ENCODE measurements at regions of chr5 and their contacts with region 1.

Region 1: DNA sequence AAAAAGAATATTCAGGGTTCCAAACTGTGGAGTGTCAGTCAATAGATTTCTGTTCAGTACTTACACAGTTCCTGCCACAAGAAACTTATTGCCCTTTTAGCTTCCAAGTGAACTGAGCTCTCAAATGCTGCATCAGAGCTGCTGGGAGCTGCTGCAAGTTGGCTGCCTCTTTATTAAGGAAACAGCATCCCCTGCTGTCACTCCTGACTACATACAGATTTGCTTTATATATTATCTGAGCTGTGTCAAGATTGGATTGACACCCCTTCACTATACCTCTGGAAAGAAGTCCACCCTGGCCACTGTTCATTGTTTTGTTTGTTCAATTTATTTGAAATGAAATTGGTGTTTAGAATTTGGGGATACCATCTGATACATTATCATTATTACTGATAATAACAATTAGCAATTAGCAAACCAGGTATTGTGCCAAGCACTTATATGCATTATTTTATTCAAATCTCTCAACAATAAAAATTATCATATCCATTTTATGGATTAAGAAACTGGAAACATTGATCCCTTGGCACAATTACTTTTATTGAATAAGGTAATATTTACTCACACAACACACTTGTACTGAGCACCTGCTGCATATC is 16.4 kb upstream of the C5orf58 start:
- DNase-seq: peak; percentile 49 to 74
- H3K4me3 ChIP-seq: no peak overlapping the region
- H3K27ac ChIP-seq: no peak overlapping the region
- H3K4me1 ChIP-seq: peaks cover 50% of the 10 kb centered on the region
- H3K27me3 ChIP-seq: no peaks in the 10 kb centered on the region
- CTCF ChIP-seq: peak; percentile 87

Region 2: GRCh38 chr5:168987543-168988300 is 1228.6 kb before region 1 on chr5:
- CTCF ChIA-PET with region 1: interaction called, 5 read pairs
- POLR2A ChIA-PET with region 1: no interaction called
- intact Hi-C with region 1: loop called (anchors 2 kb)
- DNase-seq: peak; percentile 44 to 61
- H3K4me3 ChIP-seq: no peak overlapping the region
- H3K27ac ChIP-seq: no peak overlapping the region
- H3K4me1 ChIP-seq: no peaks in the 10 kb centered on the region
- H3K27me3 ChIP-seq: peaks cover 65% of the 10 kb centered on the region
- CTCF ChIP-seq: peak; percentile 89

Region 3: DNA sequence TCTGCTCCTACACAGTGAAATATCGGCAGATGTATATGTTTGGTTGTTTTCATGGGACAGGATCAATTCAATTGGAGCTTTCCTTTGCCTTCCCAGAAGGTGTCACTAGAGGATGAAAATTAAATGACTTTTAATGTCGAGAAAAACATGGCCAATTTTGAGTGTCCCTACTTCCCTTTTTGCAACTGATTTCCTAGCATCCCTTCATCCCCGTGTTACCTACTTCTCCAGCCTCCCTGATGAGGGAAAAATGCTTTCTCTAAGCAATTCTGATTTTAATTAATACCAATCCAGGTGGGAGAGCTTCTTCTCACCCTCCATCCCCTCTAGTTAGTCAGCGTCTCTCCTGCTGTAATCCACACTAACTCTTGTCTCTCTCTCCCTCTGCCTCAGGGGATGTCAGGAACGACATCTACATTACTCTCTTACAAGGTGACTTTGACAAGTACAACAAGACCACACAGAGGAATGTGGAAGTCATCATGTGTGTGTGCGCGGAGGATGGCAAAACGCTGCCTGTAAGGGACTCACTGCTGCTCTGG is 514.4 kb before region 1 on chr5:
- CTCF ChIA-PET with region 1: interaction called, 4 read pairs
- POLR2A ChIA-PET with region 1: no interaction called
- intact Hi-C with region 1: loop called (anchors 1 kb)
- DNase-seq: peak in 1 of 2 experiments; percentile 56
- H3K4me3 ChIP-seq: no peak overlapping the region
- H3K27ac ChIP-seq: no peak overlapping the region
- H3K4me1 ChIP-seq: peaks cover 11% of the 10 kb centered on the region
- H3K27me3 ChIP-seq: no peaks in the 10 kb centered on the region
- CTCF ChIP-seq: peak; percentile 65; the same call in 1 of the 2 replicates

Region 4: DNA sequence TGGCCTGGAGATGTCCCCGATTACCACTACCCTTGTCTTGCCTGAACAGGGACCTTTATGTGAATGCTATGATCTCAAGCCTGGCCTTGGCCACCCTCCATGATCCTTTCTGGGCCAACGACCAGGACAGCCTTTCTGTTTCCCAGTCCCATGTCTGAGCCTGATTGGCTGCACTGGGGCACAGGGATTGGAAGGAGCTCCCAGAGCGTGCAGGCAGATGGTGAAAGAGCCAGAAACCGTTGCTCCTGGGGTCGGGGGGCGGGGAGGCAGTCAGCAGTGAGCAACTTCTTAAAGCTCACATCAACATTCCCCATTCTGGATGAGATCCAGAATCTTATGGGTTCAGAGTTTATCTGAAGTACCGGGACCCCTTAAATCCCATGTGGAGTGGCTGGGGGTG is 320.4 kb before region 1 on chr5:
- CTCF ChIA-PET with region 1: no interaction called
- POLR2A ChIA-PET with region 1: no interaction called
- intact Hi-C with region 1: no loop called
- DNase-seq: no peak
- H3K4me3 ChIP-seq: no peak overlapping the region
- H3K27ac ChIP-seq: no peak overlapping the region
- H3K4me1 ChIP-seq: peaks cover 14% of the 10 kb centered on the region
- H3K27me3 ChIP-seq: no peaks in the 10 kb centered on the region
- CTCF ChIP-seq: no peak

Region 5: GRCh38 chr5:170100066-170100943 is 116.1 kb before region 1 on chr5:
- CTCF ChIA-PET with region 1: interaction called, 6 read pairs
- POLR2A ChIA-PET with region 1: no interaction called
- intact Hi-C with region 1: loop called (anchors 1 kb)
- DNase-seq: peak; percentile 69 to 81
- H3K4me3 ChIP-seq: no peak overlapping the region
- H3K27ac ChIP-seq: peak overlapping the region; percentile 31; the same call in 1 of the 2 replicates
- H3K4me1 ChIP-seq: peaks cover 41% of the 10 kb centered on the region
- H3K27me3 ChIP-seq: no peaks in the 10 kb centered on the region
- CTCF ChIP-seq: peak; percentile 93

Region 6: GRCh38 chr5:170173235-170173634 is 43.1 kb before region 1 on chr5:
- CTCF ChIA-PET with region 1: no interaction called
- POLR2A ChIA-PET with region 1: no interaction called
- intact Hi-C with region 1: loop called (anchors 5 kb)
- DNase-seq: peak; percentile 79 to 90
- H3K4me3 ChIP-seq: no peak overlapping the region
- H3K27ac ChIP-seq: peak overlapping the region; percentile 93
- H3K4me1 ChIP-seq: peaks cover 51% of the 10 kb centered on the region
- H3K27me3 ChIP-seq: no peaks in the 10 kb centered on the region
- CTCF ChIP-seq: no peak

Region 7: DNA sequence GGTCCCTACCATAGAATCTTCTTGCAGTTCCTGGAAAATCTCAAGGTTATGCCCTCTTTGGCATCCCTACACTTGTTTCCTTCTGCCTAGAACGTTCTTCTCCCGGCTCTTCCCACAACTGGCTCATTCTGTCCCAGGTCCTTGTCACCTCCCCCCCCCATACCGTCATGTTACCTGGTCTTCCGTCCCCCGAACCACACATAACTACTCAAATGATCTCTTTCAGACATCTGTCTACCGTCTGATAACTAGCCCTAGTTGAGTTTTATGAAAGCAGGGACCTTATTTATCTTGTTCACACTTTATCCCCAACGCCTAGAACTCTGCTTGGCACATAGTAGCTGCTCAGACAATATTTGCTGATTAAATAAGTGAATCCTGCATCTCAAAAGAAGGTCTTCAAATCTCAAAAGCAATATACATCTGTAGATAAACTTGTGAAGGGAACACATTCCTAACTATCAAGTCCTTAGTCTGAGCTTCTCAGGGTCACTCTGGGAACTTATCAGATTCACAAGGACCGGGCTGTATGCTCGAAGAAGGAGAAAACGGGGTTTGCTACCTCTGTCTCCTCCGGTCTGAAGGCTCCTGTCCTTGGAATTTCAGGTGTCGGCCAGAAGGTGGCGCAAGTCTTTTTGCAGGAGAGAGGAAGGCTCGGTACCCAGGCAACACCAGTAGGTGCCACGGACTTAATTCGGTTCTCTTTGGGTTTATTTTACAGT is 51.2 kb after region 1 on chr5:
- CTCF ChIA-PET with region 1: interaction called, 24 read pairs
- POLR2A ChIA-PET with region 1: no interaction called
- intact Hi-C with region 1: no loop called
- DNase-seq: peak; percentile 45 to 52
- H3K4me3 ChIP-seq: peak overlapping the region; percentile 50; the same call in 1 of the 2 replicates
- H3K27ac ChIP-seq: no peak overlapping the region
- H3K4me1 ChIP-seq: no peaks in the 10 kb centered on the region
- H3K27me3 ChIP-seq: peaks cover 24% of the 10 kb centered on the region; the same call in 1 of the 2 replicates
- CTCF ChIP-seq: peak; percentile 90